Endothelial cell of umbilical vein (primary cell): ENCODE measurements at regions of chr18 and their contacts with region 1.

Region 1: DNA sequence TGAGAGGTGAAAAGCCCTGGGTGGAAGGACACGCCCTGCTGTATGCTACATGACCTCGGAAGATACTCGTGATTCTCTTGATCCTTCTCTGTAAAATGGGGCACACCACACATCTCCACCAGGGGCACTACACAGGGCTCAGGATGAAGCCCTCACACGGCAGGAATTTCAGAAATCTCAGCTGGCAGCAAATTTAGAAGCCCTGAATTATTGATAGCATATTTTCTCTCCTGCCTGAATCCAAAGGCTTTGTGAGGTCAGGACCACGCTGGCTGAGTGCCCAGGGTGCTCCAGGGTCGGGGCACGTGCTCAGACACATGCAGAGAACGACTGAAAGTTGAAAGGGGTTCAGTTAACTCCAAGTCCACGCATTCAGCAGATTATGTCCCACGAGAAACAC is 42.1 kb upstream of the GALR1 start:
- DNase-seq: peak; percentile 51
- H3K4me3 ChIP-seq: no peak overlapping the region
- H3K27ac ChIP-seq: no peak overlapping the region
- H3K4me1 ChIP-seq: no peaks in the 10 kb centered on the region
- H3K27me3 ChIP-seq: peaks cover 0 to 2% of the 10 kb centered on the region in 2 experiments
- CTCF ChIP-seq: peak; percentile 65 to 67
- POLR2A ChIP-seq: no peak

Region 2: DNA sequence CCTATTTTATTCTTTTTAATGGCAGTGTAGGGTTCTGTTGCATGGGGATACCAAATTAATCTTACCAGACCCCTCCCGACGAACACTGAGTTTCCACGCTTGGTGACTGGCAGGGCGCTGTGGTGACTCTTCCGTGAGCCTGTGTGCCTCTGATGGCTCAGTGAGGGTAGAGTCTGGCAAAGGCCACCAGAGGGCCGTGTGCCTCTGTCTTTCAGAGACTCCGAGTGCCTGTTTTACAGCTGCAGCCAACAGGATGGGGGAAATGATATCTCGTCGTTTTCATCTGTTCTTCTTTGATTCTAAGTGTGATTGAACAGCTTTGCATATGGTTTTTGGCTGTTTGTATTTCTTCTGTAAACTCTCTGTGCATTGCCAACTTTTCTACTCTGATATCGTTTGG is 285.4 kb before region 1 on chr18:
- CTCF ChIA-PET with region 1: interaction called, 10 read pairs
- POLR2A ChIA-PET with region 1: no interaction called
- dilution Hi-C with region 1: no loop called
- intact Hi-C with region 1: no loop called
- DNase-seq: peak; percentile 66
- H3K4me3 ChIP-seq: no peak overlapping the region
- H3K27ac ChIP-seq: no peak overlapping the region
- H3K4me1 ChIP-seq: no peaks in the 10 kb centered on the region
- H3K27me3 ChIP-seq: no peaks in the 10 kb centered on the region
- CTCF ChIP-seq: peak; percentile 47 to 76
- POLR2A ChIP-seq: no peak

Region 3: GRCh38 chr18:77035380-77036187 is 172.0 kb before region 1 on chr18:
- CTCF ChIA-PET with region 1: interaction called, 12 read pairs
- POLR2A ChIA-PET with region 1: no interaction called
- dilution Hi-C with region 1: no loop called
- intact Hi-C with region 1: no loop called
- DNase-seq: no peak
- H3K4me3 ChIP-seq: no peak overlapping the region
- H3K27ac ChIP-seq: no peak overlapping the region
- H3K4me1 ChIP-seq: no peaks in the 10 kb centered on the region
- H3K27me3 ChIP-seq: peaks cover 0 to 3% of the 10 kb centered on the region in 2 experiments
- CTCF ChIP-seq: no peak
- POLR2A ChIP-seq: no peak

Region 4: GRCh38 chr18:77067291-77068061 is 140.1 kb before region 1 on chr18:
- CTCF ChIA-PET with region 1: interaction called, 23 read pairs
- POLR2A ChIA-PET with region 1: no interaction called
- dilution Hi-C with region 1: no loop called
- intact Hi-C with region 1: loop called (anchors 1 kb)
- DNase-seq: peak; percentile 86
- H3K4me3 ChIP-seq: peak overlapping the region in 1 of 3 experiments; percentile 2
- H3K27ac ChIP-seq: peak overlapping the region; percentile 79
- H3K4me1 ChIP-seq: peaks cover 66% of the 10 kb centered on the region
- H3K27me3 ChIP-seq: no peaks in the 10 kb centered on the region
- CTCF ChIP-seq: no peak
- POLR2A ChIP-seq: no peak

Region 5: DNA sequence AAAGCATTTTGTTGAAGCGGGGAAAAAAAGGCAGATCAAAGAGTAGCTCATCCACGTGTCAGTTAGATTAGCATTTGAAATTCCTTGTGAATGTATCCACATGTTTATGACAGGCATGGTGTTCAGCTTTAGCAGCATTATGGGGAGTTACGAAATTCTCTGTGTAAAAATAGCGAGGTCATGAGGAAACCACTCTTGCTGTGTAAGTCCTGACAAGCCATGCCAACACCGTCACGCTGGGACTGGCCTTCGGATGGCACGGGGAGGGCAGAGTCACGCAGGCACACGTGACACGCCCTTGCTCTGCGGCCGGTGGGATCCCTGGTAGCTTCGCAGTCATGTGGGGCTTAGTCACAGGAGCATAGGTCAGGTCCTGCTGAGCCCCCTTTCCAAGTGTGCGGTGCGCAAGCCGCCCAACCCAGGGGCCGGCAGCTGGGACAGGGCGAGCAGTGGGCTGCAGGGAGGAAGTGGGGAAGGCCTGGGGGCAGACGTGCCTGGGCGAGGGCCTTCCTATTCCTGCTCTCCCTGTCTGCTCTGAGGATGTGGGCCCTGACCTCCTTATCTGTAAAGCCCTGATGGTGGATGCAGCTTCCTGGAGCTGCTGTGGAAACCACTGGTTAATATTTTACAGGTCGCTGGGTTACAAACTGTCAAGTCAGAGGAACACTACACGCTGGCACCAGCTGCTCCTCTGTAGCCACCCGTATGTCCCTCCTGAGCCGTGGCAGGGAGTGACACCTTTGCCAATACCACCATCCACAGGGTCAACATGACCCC is 92.9 kb before region 1 on chr18:
- CTCF ChIA-PET with region 1: interaction called, 13 read pairs
- POLR2A ChIA-PET with region 1: no interaction called
- dilution Hi-C with region 1: no loop called
- intact Hi-C with region 1: no loop called
- DNase-seq: peak; percentile 82
- H3K4me3 ChIP-seq: no peak overlapping the region
- H3K27ac ChIP-seq: peak overlapping the region; percentile 18
- H3K4me1 ChIP-seq: peaks cover 17% of the 10 kb centered on the region
- H3K27me3 ChIP-seq: no peaks in the 10 kb centered on the region
- CTCF ChIP-seq: no peak
- POLR2A ChIP-seq: no peak

Region 6: DNA sequence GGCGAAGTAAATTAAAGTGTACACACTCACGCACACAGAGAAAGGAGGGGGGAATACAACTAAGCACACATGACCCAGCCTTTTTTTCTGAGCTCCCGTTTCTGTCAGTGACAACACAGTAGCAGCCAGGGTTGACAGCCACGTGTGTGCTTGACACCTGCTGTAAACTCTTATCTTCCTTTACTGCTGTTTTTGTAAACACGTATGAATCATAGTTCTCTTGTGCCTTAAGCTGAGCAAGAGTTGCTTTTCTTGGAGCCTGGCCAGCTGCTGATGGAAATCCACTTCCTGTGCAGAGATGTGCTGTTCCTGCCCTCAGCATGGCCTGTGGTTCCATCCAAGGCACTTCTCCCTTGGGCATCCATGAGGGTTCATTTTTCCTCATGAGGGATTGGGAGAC is 604.0 kb after region 1 on chr18:
- CTCF ChIA-PET with region 1: no interaction called
- POLR2A ChIA-PET with region 1: no interaction called
- dilution Hi-C with region 1: no loop called
- intact Hi-C with region 1: no loop called
- DNase-seq: no peak
- H3K4me3 ChIP-seq: no peak overlapping the region
- H3K27ac ChIP-seq: no peak overlapping the region
- H3K4me1 ChIP-seq: no peaks in the 10 kb centered on the region
- H3K27me3 ChIP-seq: no peaks in the 10 kb centered on the region
- CTCF ChIP-seq: no peak
- POLR2A ChIP-seq: no peak